HEK293T (cell line): ENCODE measurements at regions of chr12 and their contacts with region 1.

Region 1: GRCh38 chr12:112108201-112109079 is at the start of gene NAA25:
- DNase-seq: peak; percentile 84

Region 2: GRCh38 chr12:112125250-112125999 is 17.0 kb after region 1 on chr12 and contains the start of gene TRAFD1:
- CTCF ChIA-PET with region 1: interaction called, 3 read pairs
- POLR2A ChIA-PET with region 1: interaction called, 28 read pairs
- DNase-seq: peak; percentile 98

Region 3: DNA sequence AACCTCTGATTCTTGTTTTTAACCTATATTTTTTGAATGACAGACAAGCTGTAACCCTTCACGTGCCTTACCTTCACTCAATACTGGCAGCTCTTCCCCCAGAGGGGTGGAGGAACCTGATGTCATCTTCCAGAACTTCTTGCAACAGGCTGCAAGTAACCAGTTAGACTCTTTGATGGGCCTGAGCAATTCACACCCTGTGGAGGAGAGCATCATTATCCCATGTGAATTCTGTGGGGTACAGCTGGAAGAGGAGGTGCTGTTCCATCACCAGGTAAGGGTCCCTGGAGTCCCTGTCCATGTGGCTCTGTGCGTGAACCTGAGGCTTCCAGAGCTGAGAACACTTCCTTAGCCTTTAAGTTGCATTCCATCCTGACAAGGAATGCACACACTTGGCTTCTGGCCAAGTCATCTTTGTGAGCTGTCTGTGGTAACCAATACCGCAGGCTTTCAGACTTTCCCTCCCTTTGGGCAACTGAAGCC is 39.6 kb after region 1 on chr12:
- CTCF ChIA-PET with region 1: no interaction called
- POLR2A ChIA-PET with region 1: no interaction called
- DNase-seq: no peak

Region 4: DNA sequence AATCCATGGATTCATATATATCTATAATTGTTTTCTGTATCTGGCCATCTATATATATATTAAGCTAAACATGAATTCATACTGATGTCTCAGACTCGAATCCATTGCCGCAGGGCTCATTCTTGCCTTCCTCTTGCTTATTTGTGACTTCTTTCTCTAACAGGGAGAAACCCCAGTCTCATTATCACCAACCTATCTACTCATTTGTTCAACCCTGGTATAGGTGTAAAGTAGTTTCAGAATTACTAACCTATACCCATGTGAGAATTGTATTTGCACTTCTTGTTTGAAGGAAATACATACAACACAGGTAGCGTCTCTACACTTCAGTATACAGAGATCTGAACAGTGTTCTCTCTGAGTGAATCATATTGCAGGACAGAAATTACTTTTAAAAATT is 388.1 kb after region 1 on chr12:
- CTCF ChIA-PET with region 1: no interaction called
- POLR2A ChIA-PET with region 1: no interaction called
- DNase-seq: no peak